H1 (cell line): ENCODE measurements at regions of chr7 and their contacts with region 1.

Region 1: DNA sequence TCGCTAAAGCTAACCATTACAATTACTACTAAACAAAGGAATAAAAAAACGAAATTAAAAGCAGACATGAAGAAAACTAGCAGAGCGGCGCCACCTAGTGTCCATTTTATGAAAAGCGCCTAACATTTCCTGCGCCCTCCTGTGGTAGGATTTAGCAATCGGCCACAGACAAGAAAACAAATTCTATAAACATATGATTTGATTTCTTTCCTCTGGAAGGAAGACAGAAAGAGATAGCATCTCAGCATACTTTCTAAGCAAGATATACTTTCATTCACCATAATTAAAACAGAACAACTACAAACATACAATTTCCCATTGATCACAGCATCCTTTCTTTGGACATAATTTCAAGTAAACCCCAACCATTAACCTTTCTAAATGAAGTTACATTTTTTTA is 337.7 kb upstream of the NPVF start:
- DNase-seq: peak; percentile 27 to 75
- H3K4me3 ChIP-seq: no peak overlapping the region
- H3K27ac ChIP-seq: no peak overlapping the region
- H3K4me1 ChIP-seq: peaks cover 0 to 4% (median 2%) of the 10 kb centered on the region in 4 experiments; a peak in 2 of 7 replicates
- H3K27me3 ChIP-seq: no peaks in the 10 kb centered on the region
- CTCF ChIP-seq: peak; percentile 54 to 100 (median 97)
- EP300 ChIP-seq: no peak
- POLR2A ChIP-seq: no peak
- RAD21 ChIP-seq: peak; percentile 95 to 96

Region 2: GRCh38 chr7:25250386-25250785 is 315.6 kb before region 1 on chr7:
- CTCF ChIA-PET with region 1: interaction called, 16 read pairs
- POLR2A ChIA-PET with region 1: no interaction called
- DNase-seq: no peak
- H3K4me3 ChIP-seq: no peak overlapping the region
- H3K27ac ChIP-seq: no peak overlapping the region
- H3K4me1 ChIP-seq: no peaks in the 10 kb centered on the region
- H3K27me3 ChIP-seq: no peaks in the 10 kb centered on the region
- CTCF ChIP-seq: no peak
- EP300 ChIP-seq: no peak
- POLR2A ChIP-seq: no peak
- RAD21 ChIP-seq: no peak

Region 3: DNA sequence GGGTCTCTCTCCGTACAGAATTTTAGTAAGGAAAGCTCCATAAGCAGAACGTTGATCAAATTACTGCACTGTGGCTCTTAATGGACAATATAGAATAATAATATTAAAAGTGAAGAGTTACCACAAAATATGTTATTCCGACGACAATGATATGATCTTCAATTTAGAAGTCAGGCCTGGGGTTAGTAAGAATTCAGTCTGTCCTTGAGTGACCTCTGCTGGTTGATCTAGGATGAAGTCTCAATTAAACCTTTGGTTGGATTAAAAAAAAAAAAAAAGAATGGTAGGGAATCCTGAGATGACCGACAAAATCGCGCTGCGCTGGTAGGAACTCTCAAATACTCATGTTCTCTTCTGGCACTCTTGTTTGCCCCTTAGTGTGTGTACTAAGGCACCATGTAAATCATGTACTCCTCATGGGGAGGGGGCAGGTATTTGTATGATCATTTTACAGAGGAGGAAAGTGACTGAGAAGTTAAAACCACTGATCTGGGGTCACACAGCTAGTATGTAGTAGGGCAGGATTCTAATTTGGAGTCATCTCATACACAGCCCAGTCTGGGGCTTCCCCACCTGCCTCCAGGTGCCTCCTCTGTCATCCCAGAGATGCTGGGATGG is 176.4 kb before region 1 on chr7:
- CTCF ChIA-PET with region 1: interaction called, 283 read pairs
- POLR2A ChIA-PET with region 1: interaction called, 3 read pairs
- DNase-seq: no peak
- H3K4me3 ChIP-seq: no peak overlapping the region
- H3K27ac ChIP-seq: no peak overlapping the region
- H3K4me1 ChIP-seq: no peaks in the 10 kb centered on the region
- H3K27me3 ChIP-seq: no peaks in the 10 kb centered on the region; a peak in 1 of 7 replicates
- CTCF ChIP-seq: peak in 2 of 3 experiments; percentile 36 to 63; a peak in 2 of 4 replicates
- EP300 ChIP-seq: no peak
- POLR2A ChIP-seq: no peak
- RAD21 ChIP-seq: peak; percentile 83 to 84

Region 4: DNA sequence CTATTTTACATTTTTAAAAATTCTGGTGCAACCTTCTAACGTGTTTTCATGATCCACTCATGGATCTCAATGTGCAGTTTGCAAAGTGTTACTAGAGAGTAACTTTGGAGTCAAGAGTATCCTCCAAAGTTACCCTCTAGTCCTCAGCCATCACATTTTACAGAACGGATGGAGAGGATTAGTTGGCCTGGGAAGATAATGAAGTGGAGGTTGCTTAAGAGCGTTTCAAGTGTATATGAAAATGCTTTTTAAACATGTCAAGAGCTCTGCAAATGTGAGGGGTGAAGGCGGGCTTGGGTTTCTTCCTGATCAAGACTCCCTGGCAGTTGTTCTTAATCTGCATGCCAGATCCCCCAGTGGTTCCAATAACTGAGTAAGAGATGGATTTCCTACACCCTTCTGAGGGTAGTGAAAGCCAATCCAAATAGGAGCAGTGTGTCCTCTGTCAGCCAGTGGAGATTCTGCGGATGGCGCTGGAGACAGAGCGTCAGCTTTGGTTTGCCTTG is 38.2 kb before region 1 on chr7:
- CTCF ChIA-PET with region 1: interaction called, 10 read pairs
- POLR2A ChIA-PET with region 1: no interaction called
- DNase-seq: no peak
- H3K4me3 ChIP-seq: no peak overlapping the region
- H3K27ac ChIP-seq: no peak overlapping the region
- H3K4me1 ChIP-seq: no peaks in the 10 kb centered on the region
- H3K27me3 ChIP-seq: no peaks in the 10 kb centered on the region
- CTCF ChIP-seq: no peak
- EP300 ChIP-seq: no peak
- POLR2A ChIP-seq: no peak
- RAD21 ChIP-seq: no peak

Region 5: GRCh38 chr7:25586513-25586912 is 20.6 kb after region 1 on chr7:
- CTCF ChIA-PET with region 1: interaction called, 10 read pairs
- POLR2A ChIA-PET with region 1: no interaction called
- DNase-seq: no peak
- H3K4me3 ChIP-seq: no peak overlapping the region
- H3K27ac ChIP-seq: no peak overlapping the region
- H3K4me1 ChIP-seq: no peaks in the 10 kb centered on the region
- H3K27me3 ChIP-seq: no peaks in the 10 kb centered on the region
- CTCF ChIP-seq: no peak
- EP300 ChIP-seq: no peak
- POLR2A ChIP-seq: no peak
- RAD21 ChIP-seq: no peak

Region 6: DNA sequence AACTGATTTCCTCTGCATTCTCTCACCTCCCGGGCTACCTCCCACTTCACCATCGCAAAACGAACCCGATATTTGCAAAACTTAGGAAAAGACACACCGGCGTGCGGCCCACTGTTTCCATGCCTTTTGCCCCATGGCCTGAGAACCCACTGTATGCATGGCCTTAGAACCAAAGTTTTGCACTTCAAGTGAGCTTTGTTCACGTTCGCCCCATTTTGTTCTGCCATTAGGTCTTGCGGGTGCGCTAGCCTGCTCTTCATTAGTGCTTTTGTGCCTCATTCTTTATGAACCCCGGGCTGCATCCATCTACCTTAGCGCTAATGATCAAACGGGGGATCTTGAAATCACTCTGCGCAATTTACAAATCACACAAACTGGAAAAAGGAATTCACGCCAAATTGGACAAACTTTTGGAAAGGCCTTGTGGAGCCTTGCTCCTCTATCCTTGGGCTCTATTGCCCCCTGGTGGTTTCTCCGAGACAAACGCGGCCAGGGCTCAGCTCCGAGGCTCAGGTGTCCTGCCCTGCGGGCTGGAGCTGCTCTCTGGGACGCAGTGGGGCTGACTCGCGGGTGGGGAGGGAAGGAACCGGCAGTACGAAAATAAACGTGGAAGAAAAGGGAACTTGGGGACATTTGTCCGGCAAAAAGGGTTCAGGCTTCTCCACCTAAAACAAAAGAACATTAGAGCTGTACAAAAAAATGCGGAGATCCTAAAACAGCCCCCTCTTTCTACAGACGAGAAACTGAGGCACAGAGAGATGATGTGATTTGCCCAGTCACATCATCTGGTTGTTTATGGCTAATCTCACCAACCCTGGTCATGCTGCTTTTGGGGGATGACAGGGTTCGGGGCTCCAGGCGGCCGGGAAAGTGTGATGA is 285.6 kb after region 1 on chr7:
- CTCF ChIA-PET with region 1: interaction called, 63 read pairs
- POLR2A ChIA-PET with region 1: no interaction called
- DNase-seq: peak in 1 of 2 experiments; percentile 91
- H3K4me3 ChIP-seq: peak overlapping the region; percentile 22 to 68 (median 34)
- H3K27ac ChIP-seq: no peak overlapping the region
- H3K4me1 ChIP-seq: peaks cover 0 to 5% (median 3%) of the 10 kb centered on the region in 4 experiments; a peak in 5 of 7 replicates
- H3K27me3 ChIP-seq: peaks cover 16 to 44% (median 32%) of the 10 kb centered on the region in 4 experiments; a peak in 6 of 7 replicates
- CTCF ChIP-seq: peak; percentile 74 to 89 (median 88)
- EP300 ChIP-seq: no peak
- POLR2A ChIP-seq: no peak
- RAD21 ChIP-seq: peak; percentile 94 to 95